IMR-90 (cell line): ENCODE measurements at regions of chr6 and their contacts with region 1.

Region 1: GRCh38 chr6:34236131-34236996 is at the start of gene HMGA1:
- DNase-seq: peak; percentile 86
- ATAC-seq: peak; percentile 78
- H3K4me3 ChIP-seq: peak within 1 kb of the TSS; percentile 76
- H3K27ac ChIP-seq: peak within 1 kb of the TSS; percentile 78
- H3K4me1 ChIP-seq: peaks cover 16% of the 10 kb centered on the region
- H3K27me3 ChIP-seq: no peaks in the 10 kb centered on the region
- CTCF ChIP-seq: no peak
- POLR2A ChIP-seq: peak; percentile 97
- RAD21 ChIP-seq: no peak
- total RNA-seq, gene HMGA1: 101 and 129 TPM in 2 replicates

Region 2: GRCh38 chr6:34213772-34214171 is 22.6 kb before region 1 on chr6:
- CTCF ChIA-PET with region 1: no interaction called
- POLR2A ChIA-PET with region 1: no interaction called
- dilution Hi-C with region 1: no loop called
- in situ Hi-C with region 1: no loop called
- intact Hi-C with region 1: loop called (anchors 2 kb)
- DNase-seq: peak; percentile 81
- ATAC-seq: peak; percentile 91
- H3K4me3 ChIP-seq: no peak overlapping the region
- H3K27ac ChIP-seq: no peak overlapping the region
- H3K4me1 ChIP-seq: no peaks in the 10 kb centered on the region; the same call in 1 of the 2 replicates
- H3K27me3 ChIP-seq: no peaks in the 10 kb centered on the region
- CTCF ChIP-seq: no peak
- POLR2A ChIP-seq: no peak
- RAD21 ChIP-seq: no peak

Region 3: GRCh38 chr6:35128496-35128895 is 892.1 kb after region 1 on chr6:
- CTCF ChIA-PET with region 1: no interaction called
- POLR2A ChIA-PET with region 1: interaction called, 10 read pairs
- dilution Hi-C with region 1: no loop called
- in situ Hi-C with region 1: no loop called
- intact Hi-C with region 1: no loop called
- DNase-seq: peak; percentile 59
- ATAC-seq: peak; percentile 88
- H3K4me3 ChIP-seq: no peak overlapping the region
- H3K27ac ChIP-seq: no peak overlapping the region
- H3K4me1 ChIP-seq: no peaks in the 10 kb centered on the region
- H3K27me3 ChIP-seq: peaks cover 17% of the 10 kb centered on the region
- CTCF ChIP-seq: no peak
- POLR2A ChIP-seq: no peak
- RAD21 ChIP-seq: no peak